GM18951 (cell line): ENCODE measurements at regions of chr7 and their contacts with region 1.

Region 1: DNA sequence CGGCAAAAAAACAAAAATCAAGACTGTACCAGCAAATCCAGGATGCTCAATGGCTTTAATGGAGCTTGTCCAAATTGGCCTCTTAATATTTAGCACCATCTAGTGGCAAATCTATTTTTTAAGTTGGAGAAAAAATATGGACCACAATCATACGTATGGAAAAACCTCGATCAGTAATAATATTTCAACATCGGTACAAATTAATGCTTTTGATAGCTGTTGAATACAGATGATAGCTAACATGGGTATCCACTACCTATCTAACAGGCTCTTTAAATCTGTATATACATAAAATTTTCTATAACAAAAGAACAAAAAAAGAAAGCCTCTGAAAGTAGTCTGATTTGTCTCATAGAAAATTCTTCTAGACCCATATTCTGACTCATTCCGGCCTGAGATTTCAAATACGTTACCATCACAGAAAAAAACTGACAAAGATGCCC is 29.2 kb downstream of the COA1 start:
- POLR2A ChIP-seq: no peak

Region 2: DNA sequence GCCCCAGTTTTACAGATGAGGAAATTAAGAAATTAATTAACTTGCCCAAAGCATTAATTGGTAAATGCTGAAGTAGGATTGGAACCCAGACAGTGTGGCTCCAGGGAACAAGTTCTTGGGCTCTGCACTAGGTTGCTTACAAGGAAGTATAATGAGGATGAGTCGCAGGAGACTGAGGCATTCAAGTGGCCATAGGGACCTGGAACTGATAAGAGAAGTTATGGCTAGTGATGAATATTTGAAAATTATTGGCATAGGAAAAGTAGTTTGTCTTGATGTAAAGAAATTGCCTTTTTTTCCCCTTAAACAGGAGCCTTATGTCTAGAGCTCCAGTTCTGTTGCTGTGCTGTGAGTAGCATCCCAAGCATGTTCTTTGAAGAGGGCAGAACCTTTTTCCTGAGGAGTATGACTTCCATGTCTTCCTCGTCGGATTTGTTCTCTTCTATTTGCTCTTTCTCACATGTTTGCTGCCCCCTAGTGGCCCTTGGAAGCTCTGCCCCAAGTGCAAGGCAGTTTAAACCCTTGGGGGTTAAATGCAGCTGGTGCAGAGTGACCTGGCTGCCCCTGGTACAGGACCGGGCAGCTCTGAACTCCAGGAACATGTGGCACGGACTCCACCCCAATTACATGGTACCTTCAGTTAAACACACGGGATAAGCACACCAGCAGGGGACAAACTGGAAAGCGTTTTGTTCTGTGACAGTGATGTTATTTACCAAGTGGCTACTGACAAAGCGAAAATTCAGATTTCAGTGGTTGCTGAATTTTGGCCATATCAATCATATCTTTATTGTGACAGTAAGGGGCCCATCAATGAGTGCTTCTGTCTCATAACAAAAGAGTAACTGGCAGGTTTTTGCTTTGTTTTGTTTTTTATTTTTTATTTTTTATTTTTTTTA is 438.9 kb before region 1 on chr7:
- in situ Hi-C with region 1: loop called (anchors 25 kb)
- POLR2A ChIP-seq: no peak

Region 3: DNA sequence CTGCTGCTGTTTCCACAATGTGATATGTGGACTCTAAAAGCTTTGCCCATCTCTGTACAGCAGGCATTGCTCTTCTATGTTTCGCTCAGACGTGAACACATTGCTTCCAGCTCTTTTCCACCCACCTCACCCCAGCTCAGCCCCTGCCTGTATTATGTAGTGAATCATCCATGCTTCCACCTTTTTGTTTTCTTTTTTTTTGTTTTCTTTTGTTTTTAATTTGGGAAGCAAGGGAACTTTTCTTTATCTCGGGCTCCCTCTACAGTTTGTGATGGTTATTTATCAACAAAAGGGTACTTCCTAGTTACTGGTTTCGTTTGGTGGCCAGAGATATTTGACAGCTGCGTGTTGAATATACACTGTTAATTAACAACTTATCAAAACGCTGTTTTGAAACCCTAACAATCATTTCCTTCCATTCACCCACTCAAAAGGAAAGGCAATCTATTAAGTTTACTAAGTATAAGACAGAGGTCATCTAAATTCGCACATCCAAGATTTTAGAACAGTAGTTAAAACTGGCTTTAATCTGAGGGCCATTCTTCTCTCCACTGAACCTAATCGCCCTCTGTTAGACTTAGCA is 245.1 kb before region 1 on chr7:
- in situ Hi-C with region 1: loop called (anchors 25 kb)
- POLR2A ChIP-seq: no peak

Region 4: GRCh38 chr7:43582503-43583423 is 117.3 kb before region 1 on chr7 and contains the start of gene STK17A:
- in situ Hi-C with region 1: loop called (anchors 5 kb)
- POLR2A ChIP-seq: peak; percentile 98

Region 5: DNA sequence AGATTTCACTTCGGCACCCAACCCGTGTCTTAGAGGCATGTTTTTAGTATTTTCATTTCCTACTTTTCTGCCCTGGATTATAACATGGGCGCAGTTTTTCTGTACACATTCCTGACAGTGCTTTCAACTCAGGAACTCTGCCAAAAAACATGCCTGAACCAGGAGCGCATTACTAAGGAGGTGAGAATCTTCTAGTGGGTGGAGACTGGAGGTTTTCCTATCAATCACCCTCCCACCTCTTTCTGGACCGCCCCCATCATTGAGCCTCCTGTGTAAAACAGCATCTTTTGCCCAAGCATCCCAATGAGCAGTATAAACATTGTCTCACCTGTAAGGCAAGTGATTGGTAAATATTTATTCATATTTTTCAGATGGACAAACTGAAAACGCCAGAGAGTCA is 64.0 kb before region 1 on chr7:
- in situ Hi-C with region 1: no loop called
- POLR2A ChIP-seq: no peak

Region 6: GRCh38 chr7:43779032-43779812 is 79.1 kb after region 1 on chr7:
- in situ Hi-C with region 1: no loop called
- POLR2A ChIP-seq: no peak